WTC11 (cell line): ENCODE measurements at regions of chr1 and their contacts with region 1.

Region 1: GRCh38 chr1:94463765-94464330 is 45.7 kb downstream of the ABCD3 start:
- DNase-seq: no peak
- ATAC-seq: peak; percentile 46; the same call in 1 of the 2 replicates
- H3K4me3 Mint-ChIP-seq: no peak overlapping the region
- H3K27ac Mint-ChIP-seq: peak overlapping the region; percentile 6; the same call in 1 of the 2 replicates
- H3K4me1 Mint-ChIP-seq: peaks cover 4% of the 10 kb centered on the region; the same call in 1 of the 2 replicates
- H3K27me3 Mint-ChIP-seq: no peaks in the 10 kb centered on the region; the same call in 1 of the 2 replicates
- CTCF ChIP-seq: no peak

Region 2: DNA sequence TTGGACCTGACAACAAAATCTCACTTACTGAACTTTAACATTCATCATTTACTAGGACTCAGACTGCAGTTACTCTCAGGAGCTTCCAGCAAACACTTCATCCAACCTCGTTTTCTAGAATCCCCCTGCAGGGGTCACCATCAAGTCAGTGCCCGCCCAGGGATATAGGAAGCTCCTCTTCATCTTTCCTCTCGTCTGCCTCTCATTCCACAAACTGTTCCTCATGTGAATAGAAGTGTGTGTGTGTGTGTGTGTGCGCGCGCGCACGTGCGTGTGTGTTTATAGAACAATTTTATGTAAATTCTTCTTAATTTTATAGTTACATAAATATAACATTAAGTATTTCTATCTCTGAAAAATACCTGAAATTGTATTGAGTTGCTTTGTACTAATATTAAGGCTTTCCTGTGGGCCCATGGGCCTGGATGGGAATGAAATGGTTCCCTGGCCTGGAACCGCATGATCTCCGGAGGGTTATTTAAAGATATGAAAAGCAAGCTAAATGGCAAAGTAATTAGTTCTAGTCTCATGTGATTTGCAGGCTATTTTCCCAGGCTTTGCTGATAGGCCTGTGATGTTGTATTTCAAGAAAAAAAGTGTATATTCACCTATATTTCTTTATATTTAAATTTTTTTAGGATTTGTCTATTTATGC is 67.4 kb before region 1 on chr1:
- CTCF ChIA-PET with region 1: interaction called, 13 read pairs
- POLR2A ChIA-PET with region 1: no interaction called
- DNase-seq: peak; percentile 47
- ATAC-seq: peak; percentile 82
- H3K4me3 Mint-ChIP-seq: no peak overlapping the region
- H3K27ac Mint-ChIP-seq: no peak overlapping the region; the same call in 1 of the 2 replicates
- H3K4me1 Mint-ChIP-seq: peaks cover 26% of the 10 kb centered on the region
- H3K27me3 Mint-ChIP-seq: no peaks in the 10 kb centered on the region
- CTCF ChIP-seq: no peak